Motor neuron (in vitro differentiated cells): ENCODE measurements at regions of chr17 and their contacts with region 1.

Region 1: DNA sequence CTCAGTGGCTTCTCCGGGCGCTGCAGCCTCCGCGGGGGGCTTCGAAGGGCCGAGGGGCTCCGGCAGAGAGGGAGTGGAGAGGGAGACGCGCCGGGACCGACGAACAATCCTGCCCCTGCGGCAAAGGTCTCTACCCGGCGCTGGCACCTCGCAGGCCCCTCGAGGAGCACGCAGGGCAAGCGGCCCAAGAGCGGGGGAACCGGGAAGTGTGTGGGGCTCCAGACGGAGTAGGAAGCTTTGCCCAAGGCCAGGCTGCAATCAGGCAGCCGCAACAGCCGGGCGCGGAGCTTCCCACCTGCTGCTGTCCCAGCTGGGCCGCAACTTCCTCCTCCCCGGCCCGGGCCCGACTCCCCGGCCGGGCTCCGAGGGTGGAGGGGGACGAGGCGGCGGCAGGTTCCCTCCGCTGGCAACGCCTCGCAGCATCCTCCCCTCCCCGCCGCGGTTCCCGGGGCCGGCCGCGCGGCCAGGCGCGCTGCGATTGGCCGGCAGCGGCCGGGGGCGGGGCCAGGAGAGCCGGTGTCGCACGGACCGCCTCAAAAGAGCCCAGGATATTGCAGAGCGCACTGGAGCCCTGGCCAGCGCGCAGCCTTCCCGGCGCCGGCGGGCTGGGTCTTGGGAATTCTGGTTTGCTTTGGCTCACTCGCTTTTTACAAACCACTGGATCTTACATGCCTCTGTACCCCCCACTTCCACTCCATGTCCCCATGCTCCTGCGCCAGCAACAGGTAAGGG is at the start of gene KCNJ2:
- ATAC-seq: peak; percentile 92 to 96 (median 94)
- H3K4me3 ChIP-seq: peak within 1 kb of the TSS; percentile 50 to 61 (median 55)
- H3K27ac ChIP-seq: peak within 1 kb of the TSS in 1 of 2 donors; percentile 18
- H3K4me1 ChIP-seq: peaks cover 15 to 19% of the 10 kb centered on the region in 2 donors
- total RNA-seq, gene KCNJ2: 1.1 to 60.4 (median 5.3) TPM

Region 2: DNA sequence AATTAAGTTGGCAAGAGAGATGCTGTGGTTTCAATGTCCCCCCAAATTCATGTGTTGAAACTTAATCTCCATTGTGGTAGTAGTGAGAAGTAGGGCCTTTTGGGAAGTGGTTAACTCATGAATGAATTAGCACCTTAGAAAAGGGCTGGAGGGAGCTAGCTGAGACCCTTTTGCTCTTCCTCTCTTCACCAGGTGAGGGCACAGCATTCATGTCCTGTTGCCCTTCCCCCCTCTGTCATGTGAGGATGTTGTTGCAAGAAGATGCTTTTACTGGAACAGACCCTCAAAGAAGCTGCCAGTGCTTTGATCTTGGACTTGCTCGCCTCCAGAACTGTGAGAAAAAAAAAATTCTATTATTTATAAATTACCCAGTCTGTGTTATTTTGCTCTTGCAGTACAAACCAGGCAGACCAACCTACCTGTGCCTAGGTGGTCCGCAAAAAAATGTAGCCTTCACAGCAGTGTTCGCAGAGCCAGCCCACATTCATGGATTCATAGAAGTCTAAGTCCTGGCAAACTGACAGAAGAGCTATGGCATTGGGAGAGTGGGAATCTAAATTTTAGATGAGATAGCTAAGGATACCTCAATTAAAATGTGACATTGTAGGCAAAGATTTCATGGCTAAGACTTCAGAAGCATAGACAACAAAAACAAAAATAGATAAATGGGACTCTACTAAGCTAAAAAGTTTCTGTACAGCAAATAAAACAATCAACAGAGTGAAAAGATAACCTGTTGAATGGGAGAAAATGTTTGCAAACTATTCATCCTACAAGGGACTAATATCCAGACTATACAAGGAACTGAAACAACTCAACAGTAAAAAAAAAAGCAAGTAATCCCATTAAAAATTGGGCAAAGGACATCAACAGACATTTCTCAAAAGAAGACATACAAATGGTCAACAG is 810.2 kb before region 1 on chr17:
- in situ Hi-C with region 1: loop called in 1 of 9 experiments (anchors 25 kb)
- ATAC-seq: peak in 2 of 8 experiments; percentile 38 to 46
- H3K4me3 ChIP-seq: no peak overlapping the region
- H3K27ac ChIP-seq: no peak overlapping the region
- H3K4me1 ChIP-seq: no peaks in the 10 kb centered on the region

Region 3: GRCh38 chr17:69574257-69575197 is 594.6 kb before region 1 on chr17:
- in situ Hi-C with region 1: loop called in 3 of 9 experiments (anchors 25 kb)
- ATAC-seq: peak in 2 of 8 experiments; percentile 30 to 43
- H3K4me3 ChIP-seq: no peak overlapping the region
- H3K27ac ChIP-seq: no peak overlapping the region
- H3K4me1 ChIP-seq: peaks cover 0 to 6% of the 10 kb centered on the region in 2 donors

Region 4: GRCh38 chr17:69581061-69581961 is 587.8 kb before region 1 on chr17:
- in situ Hi-C with region 1: loop called in 1 of 9 experiments (anchors 25 kb)
- ATAC-seq: no peak
- H3K4me3 ChIP-seq: no peak overlapping the region
- H3K27ac ChIP-seq: no peak overlapping the region
- H3K4me1 ChIP-seq: no peaks in the 10 kb centered on the region

Region 5: DNA sequence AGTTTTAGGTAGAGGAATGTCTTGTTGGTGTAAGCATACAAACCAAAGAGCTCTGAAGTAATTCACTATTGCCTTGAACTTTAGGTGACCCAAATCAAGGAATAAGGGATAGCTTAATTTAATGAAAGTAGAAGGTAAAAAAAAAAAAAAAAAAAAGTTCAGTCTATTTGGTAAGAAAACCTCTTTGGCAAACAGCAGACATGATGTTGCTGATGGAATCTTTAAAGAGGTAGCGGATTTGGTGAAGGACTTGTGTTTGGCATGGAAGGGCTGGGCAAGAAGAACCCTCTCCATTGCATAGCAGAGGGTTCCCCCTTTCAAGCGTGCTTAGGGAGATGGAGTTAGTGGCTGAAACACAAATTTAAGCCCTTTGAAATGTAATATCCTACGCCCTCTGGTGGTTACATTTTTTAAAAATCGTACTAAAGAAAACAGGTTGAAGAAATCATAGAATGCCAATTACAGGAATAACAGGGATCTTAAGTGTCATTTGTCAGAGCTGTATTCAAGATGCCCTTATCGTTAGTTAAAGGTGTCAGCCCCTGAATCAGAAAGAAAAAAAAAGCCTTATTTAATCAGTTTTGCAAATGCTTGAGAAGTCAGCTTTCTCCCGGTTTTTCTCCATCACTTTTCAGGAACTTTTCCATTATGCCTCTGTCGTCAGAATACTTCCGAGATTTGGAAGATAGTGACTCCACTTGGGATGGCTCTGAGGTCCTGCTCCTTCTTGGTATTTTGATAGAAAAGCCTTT is 383.3 kb after region 1 on chr17:
- in situ Hi-C with region 1: loop called in 2 of 9 experiments (anchors 25 kb)
- ATAC-seq: peak in 6 of 8 experiments; percentile 23 to 59 (median 36)
- H3K4me3 ChIP-seq: no peak overlapping the region
- H3K27ac ChIP-seq: no peak overlapping the region
- H3K4me1 ChIP-seq: no peaks in the 10 kb centered on the region

Region 6: DNA sequence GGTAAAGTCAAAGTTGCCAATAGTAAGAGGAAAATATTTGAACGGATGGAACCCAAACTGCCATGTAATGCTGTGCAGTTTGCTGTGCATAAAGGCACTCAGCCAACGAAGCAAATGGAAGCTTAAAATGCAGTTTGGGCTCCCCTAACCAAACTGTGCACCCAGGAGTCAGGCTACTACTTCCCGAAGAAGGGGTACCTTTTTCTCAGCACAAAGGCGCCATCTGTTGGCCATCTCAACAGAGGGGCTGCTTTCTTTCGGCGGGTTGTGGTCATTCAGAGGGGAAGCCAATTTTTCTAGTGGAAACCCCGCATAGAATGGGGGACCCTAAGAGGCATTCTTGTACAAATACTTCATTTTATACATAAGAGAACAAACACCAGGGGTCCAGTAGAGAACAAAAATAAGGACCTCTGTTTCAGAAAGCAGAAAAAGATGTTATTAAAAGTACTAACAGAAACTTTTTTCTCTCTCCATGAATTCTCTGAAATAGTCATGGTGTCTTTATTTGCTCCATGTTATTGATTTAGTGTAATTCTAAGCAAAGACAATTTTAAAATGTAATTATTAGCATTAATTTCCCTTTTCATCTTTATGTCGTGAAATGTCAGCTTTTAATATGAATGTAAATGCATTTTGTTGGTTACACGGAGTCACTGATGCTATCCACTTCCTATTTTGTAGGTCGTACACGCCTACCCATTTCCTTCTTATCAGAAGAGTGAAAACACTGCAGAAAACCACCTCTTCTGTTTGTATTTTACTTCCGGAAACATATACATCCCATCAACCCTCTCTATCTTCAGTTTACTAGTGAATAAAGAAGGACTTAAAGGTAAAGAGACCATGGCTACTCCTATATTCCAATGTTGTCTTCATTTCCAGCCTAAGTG is 453.5 kb after region 1 on chr17:
- in situ Hi-C with region 1: loop called in 1 of 9 experiments (anchors 25 kb)
- ATAC-seq: peak in 3 of 8 experiments; percentile 48 to 94 (median 52)
- H3K4me3 ChIP-seq: no peak overlapping the region
- H3K27ac ChIP-seq: no peak overlapping the region
- H3K4me1 ChIP-seq: peaks cover 0 to 3% of the 10 kb centered on the region in 2 donors